ENCODE measurements at regions of chr7 and their contacts with region 1.

Region 1: DNA sequence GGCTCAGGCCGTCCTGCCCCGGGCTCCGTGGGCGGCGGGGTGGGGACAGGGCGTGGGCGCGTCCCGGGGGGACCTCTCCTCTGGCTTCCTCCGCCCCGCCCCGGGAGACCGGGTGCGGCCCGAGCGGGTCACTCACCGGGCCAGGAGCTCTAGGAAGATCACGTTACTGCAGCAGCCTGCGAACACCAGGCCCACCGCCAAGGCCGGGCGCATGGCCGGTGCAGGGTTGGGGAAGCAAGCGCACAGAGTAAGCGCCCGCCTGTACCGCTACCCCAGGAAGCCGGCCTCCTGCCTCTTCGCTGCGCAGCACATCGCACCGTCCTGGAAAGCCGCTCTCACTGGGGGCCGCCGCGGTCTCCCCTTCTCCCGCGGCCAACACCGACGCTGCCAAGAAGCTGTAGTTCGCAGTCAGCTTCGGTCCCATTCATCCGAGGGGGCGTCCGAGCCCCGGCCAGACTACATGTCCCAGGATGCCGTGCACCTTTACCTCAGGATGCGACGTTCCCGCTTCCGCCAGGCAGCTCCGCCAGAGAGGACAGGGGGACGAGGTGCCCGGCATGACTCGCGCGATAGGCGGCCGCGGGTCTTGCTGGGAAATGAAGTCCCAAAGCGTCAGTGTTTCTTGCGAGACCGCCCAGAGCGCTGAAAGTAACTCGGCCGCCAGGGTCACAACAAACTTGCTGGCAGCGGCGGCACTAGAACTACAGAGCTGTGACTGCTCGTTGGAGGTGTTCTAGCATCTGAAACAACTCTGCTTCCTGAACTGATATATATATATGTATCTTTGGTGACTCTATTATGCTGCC is at the start of gene SLC35B4:
- DNase-seq: peak; percentile 98
- ATAC-seq: peak; percentile 99 to 100 (median 100)
- H3K4me3 ChIP-seq: peak within 1 kb of the TSS; percentile 99
- H3K27ac ChIP-seq: peak within 1 kb of the TSS; percentile 91
- H3K4me1 ChIP-seq: peaks cover 4% of the 10 kb centered on the region
- H3K27me3 ChIP-seq: no peaks in the 10 kb centered on the region
- CTCF ChIP-seq: peak; percentile 27
- total RNA-seq, gene SLC35B4: 3.6 to 6.8 (median 5.4) TPM

Region 2: DNA sequence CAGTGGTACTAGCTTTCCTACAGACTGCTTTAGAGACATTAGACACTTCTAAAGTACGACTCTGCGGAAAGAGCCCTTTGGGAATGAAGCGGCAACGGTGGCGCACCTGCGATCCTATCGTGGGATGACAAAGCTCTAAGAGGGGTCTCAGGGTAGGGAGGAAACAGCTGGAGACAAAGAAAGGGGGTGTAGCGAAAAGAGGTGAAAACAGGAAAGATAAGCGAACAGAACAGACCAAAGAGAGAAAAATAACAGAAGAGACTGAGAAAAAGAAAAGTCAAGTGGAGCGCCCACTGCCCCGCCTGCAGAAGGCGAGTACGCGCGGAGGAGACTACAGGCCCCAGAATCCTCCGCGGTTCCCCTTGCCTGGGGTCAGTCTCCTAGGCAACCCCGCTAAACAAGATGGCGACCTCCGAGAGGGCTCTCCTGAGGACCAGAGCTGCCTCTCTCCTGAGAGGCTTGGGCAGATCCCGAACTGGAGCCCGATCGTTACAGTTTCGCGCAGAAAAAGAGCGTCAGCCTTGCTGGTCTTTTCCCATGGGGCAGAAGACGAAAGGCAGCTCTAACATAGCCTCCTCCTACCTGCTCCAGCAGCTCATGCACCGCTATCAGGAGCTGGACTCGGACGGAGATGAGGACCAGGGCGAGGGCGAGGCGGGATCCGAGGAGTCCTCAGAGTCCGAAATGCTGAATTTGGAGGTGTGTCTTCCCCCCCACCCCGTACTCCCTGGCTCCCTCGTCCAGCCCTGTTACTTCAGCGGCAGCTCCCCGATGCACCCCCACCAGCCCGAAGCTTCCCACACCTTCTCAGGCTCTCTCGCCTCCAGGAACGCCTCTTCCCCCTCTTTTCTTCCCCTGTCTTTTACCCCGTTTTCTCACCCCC is 189.5 kb before region 1 on chr7 and contains the start of gene LRGUK:
- intact Hi-C with region 1: loop called in 1 of 2 experiments (anchors 5 kb)
- DNase-seq: peak; percentile 85 to 90
- ATAC-seq: peak; percentile 96 to 100 (median 100)
- H3K4me3 ChIP-seq: peak within 1 kb of the TSS; percentile 79
- H3K27ac ChIP-seq: no peak within 1 kb of the TSS
- H3K4me1 ChIP-seq: no peaks in the 10 kb centered on the region
- H3K27me3 ChIP-seq: peaks cover 0 to 4% (median 0%) of the 10 kb centered on the region in 3 donors
- CTCF ChIP-seq: no peak
- total RNA-seq, gene LRGUK: 0.07 to 0.43 (median 0.20) TPM